ENCODE measurements at regions of chr10 and their contacts with region 1.

Region 1: DNA sequence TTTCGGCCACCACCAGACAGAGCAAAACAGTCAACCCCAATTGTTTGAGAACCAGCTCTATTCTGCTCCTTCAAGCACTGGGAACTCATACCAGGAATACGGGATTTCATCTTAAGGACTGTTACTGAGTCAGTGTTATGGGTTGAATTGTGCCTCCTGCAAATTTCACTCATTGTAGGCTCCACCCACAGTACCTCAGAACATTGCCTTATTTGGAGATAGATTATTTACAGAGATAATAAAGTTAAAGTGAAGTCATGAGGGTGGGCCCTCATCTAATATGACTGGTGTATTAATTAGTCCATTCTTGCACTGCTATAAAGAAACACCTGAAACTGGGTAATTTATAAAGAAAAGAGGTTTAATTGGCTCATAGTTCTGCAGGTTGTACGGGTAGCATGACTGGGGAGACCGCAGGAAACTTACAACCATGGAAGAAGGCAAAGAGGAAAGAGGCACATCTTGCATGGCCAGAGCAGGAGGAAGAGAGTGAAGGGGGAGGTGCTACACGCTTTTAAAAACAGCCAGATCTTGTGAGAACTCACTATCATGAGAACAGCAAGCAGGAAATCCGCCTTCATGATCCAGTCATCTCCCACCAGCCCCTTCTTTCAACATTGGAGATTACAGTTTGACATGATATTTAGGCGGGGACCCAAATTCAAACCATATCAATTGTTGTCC is 14.3 kb upstream of the ZNF248 start:
- DNase-seq: no peak
- ATAC-seq: no peak
- H3K4me3 ChIP-seq: no peak overlapping the region
- H3K4me3 Mint-ChIP-seq: no peak overlapping the region
- H3K27ac ChIP-seq: no peak overlapping the region
- H3K27ac Mint-ChIP-seq: no peak overlapping the region
- H3K4me1 ChIP-seq: no peaks in the 10 kb centered on the region
- H3K4me1 Mint-ChIP-seq: no peaks in the 10 kb centered on the region
- H3K27me3 ChIP-seq: no peaks in the 10 kb centered on the region
- H3K27me3 Mint-ChIP-seq: no peaks in the 10 kb centered on the region
- CTCF ChIP-seq: no peak

Region 2: GRCh38 chr10:37206132-37206531 is 665.6 kb before region 1 on chr10:
- CTCF ChIA-PET with region 1: no interaction called
- POLR2A ChIA-PET with region 1: no interaction called
- intact Hi-C with region 1: no loop called
- DNase-seq: no peak
- ATAC-seq: no peak
- H3K4me3 ChIP-seq: no peak overlapping the region
- H3K4me3 Mint-ChIP-seq: no peak overlapping the region
- H3K27ac ChIP-seq: no peak overlapping the region
- H3K27ac Mint-ChIP-seq: no peak overlapping the region
- H3K4me1 ChIP-seq: no peaks in the 10 kb centered on the region
- H3K4me1 Mint-ChIP-seq: no peaks in the 10 kb centered on the region
- H3K27me3 ChIP-seq: no peaks in the 10 kb centered on the region
- H3K27me3 Mint-ChIP-seq: no peaks in the 10 kb centered on the region
- CTCF ChIP-seq: no peak

Region 3: DNA sequence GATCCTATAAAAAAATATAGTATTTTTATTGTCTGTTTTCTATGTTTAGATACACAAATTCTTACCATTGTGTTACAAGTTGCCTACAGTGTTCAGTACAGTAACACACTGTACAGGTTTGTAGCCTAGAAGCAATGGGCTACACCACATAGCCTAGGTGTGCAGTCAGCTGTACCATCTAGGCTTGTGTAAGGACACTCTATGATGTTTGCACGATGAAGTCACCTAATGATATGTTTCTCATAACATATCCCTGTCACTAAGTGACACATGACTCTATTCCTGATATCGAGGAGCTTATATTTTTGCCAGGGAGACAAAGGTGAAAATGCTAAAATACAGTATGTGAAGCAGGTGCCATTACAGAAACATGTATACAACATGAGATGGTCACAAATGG is 86.1 kb after region 1 on chr10:
- CTCF ChIA-PET with region 1: no interaction called
- POLR2A ChIA-PET with region 1: no interaction called
- intact Hi-C with region 1: loop called in 1 of 2 experiments (anchors 5 kb)
- DNase-seq: no peak
- ATAC-seq: no peak
- H3K4me3 ChIP-seq: no peak overlapping the region
- H3K4me3 Mint-ChIP-seq: no peak overlapping the region
- H3K27ac ChIP-seq: no peak overlapping the region
- H3K27ac Mint-ChIP-seq: no peak overlapping the region
- H3K4me1 ChIP-seq: no peaks in the 10 kb centered on the region
- H3K4me1 Mint-ChIP-seq: no peaks in the 10 kb centered on the region
- H3K27me3 ChIP-seq: no peaks in the 10 kb centered on the region
- H3K27me3 Mint-ChIP-seq: no peaks in the 10 kb centered on the region
- CTCF ChIP-seq: no peak

Measured in CD8-positive, alpha-beta T cell (primary cell).